Activated CD8-positive, alpha-beta T cell treated with anti-CD3 and anti-CD28 coated beads, Interleukin-2, amount 10 ng/mL, durations not matched to agents 7 days and 5 days (primary cell): ENCODE measurements at regions of chr2 and their contacts with region 1.

Region 1: DNA sequence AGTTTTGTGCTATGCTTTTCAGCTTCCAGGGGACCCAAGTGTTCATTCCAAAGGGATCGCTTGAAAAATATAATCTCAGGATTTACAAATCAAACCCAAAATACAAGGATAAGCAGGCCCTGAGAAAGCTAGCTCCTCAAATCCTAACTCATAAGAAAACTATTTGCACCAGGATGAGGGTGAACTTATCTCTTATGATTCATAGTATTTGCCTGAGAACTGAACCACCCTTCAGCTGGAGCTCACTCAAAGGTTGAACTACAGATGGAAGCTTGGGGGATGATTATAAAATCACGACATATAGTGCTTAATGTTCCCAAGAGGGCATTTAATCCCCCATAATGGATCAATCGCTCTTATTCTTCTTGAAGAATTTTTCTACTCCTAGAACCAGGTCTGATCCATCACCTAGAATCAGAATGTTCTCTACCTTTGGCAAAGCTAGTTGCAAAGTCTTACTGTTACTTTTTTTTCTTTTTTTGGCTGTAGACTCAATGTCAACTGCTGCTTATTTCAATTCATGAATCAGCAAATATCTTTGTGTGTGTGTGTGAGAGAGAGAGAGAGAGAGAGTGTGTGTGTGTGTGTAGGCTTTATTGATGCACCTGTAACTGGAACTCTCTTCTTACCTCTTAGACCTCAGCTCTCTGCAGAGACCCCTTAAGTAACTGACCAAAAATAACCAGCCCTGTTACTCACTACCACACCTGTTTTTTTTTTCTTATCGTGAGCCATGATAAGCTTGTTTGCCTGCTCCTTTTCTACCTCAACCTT is 44.8 kb downstream of the ARL4C start:
- DNase-seq: no peak
- ATAC-seq: peak; percentile 7
- H3K4me3 Mint-ChIP-seq: peak overlapping the region; percentile 85
- H3K27ac Mint-ChIP-seq: peak overlapping the region; percentile 92
- H3K4me1 Mint-ChIP-seq: peaks cover 86% of the 10 kb centered on the region
- H3K27me3 Mint-ChIP-seq: no peaks in the 10 kb centered on the region

Region 2: GRCh38 chr2:234251326-234252271 is 200.4 kb before region 1 on chr2:
- CTCF ChIA-PET with region 1: no interaction called
- POLR2A ChIA-PET with region 1: no interaction called
- DNase-seq: no peak
- ATAC-seq: no peak
- H3K4me3 Mint-ChIP-seq: no peak overlapping the region
- H3K27ac Mint-ChIP-seq: no peak overlapping the region
- H3K4me1 Mint-ChIP-seq: peaks cover 7% of the 10 kb centered on the region
- H3K27me3 Mint-ChIP-seq: peaks cover 13% of the 10 kb centered on the region

Region 3: DNA sequence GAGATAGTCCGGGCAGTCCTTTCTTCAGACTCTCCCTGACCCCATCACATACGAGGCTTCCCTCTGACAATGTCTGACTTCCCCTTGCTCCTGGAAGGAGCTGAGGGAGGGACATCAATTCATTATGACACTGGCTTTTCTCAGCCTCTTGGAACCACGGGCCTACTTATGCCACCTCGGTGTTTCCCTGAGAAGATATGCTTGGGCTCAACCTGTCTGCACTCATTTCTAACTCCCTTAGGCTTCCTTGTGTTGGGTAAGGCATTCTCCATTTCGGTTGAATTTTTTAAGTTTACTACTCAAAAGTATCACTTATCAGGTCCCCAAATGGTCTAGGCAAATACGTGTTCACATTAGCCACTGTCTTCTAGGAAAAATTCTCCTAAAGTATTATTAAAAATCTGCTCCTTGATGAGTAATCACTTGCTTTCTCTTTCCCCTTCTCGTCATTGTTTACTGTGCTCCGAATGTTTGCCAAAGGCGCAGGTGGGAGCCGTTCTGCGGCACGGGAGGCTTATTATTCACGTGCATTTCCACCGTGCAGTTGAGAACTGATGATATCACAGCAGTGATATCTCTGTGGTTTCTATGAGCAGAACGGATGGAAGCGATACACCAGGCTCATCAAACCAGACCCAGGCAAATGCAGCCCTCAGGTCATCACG is 11.7 kb after region 1 on chr2:
- CTCF ChIA-PET with region 1: interaction called, 17 read pairs
- POLR2A ChIA-PET with region 1: interaction called, 38 read pairs
- DNase-seq: peak; percentile 76
- ATAC-seq: peak; percentile 85
- H3K4me3 Mint-ChIP-seq: peak overlapping the region; percentile 60
- H3K27ac Mint-ChIP-seq: peak overlapping the region; percentile 81
- H3K4me1 Mint-ChIP-seq: peaks cover 55% of the 10 kb centered on the region
- H3K27me3 Mint-ChIP-seq: no peaks in the 10 kb centered on the region

Region 4: GRCh38 chr2:234478121-234478858 is 26.3 kb after region 1 on chr2:
- CTCF ChIA-PET with region 1: interaction called, 26 read pairs
- POLR2A ChIA-PET with region 1: interaction called, 27 read pairs
- DNase-seq: no peak
- ATAC-seq: peak; percentile 45
- H3K4me3 Mint-ChIP-seq: no peak overlapping the region
- H3K27ac Mint-ChIP-seq: peak overlapping the region; percentile 39
- H3K4me1 Mint-ChIP-seq: peaks cover 47% of the 10 kb centered on the region
- H3K27me3 Mint-ChIP-seq: no peaks in the 10 kb centered on the region

Region 5: GRCh38 chr2:234488913-234489451 is 36.9 kb after region 1 on chr2:
- CTCF ChIA-PET with region 1: interaction called, 26 read pairs
- POLR2A ChIA-PET with region 1: interaction called, 220 read pairs
- DNase-seq: peak; percentile 91
- ATAC-seq: peak; percentile 77
- H3K4me3 Mint-ChIP-seq: peak overlapping the region; percentile 77
- H3K27ac Mint-ChIP-seq: peak overlapping the region; percentile 97
- H3K4me1 Mint-ChIP-seq: peaks cover 88% of the 10 kb centered on the region
- H3K27me3 Mint-ChIP-seq: no peaks in the 10 kb centered on the region